IMR-90 (cell line): ENCODE measurements at regions of chr18 and their contacts with region 1.

Region 1: GRCh38 chr18:56702946-56703345 is 51.8 kb downstream of the WDR7 start:
- DNase-seq: peak; percentile 50
- ATAC-seq: peak; percentile 68
- H3K4me3 ChIP-seq: no peak overlapping the region
- H3K27ac ChIP-seq: no peak overlapping the region
- H3K4me1 ChIP-seq: no peaks in the 10 kb centered on the region
- H3K27me3 ChIP-seq: no peaks in the 10 kb centered on the region
- CTCF ChIP-seq: peak; percentile 59
- POLR2A ChIP-seq: no peak
- RAD21 ChIP-seq: peak; percentile 52

Region 2: GRCh38 chr18:56489893-56490292 is 213.1 kb before region 1 on chr18:
- CTCF ChIA-PET with region 1: no interaction called
- POLR2A ChIA-PET with region 1: no interaction called
- dilution Hi-C with region 1: no loop called
- in situ Hi-C with region 1: no loop called
- intact Hi-C with region 1: no loop called
- DNase-seq: no peak
- ATAC-seq: no peak
- H3K4me3 ChIP-seq: no peak overlapping the region
- H3K27ac ChIP-seq: no peak overlapping the region
- H3K4me1 ChIP-seq: no peaks in the 10 kb centered on the region
- H3K27me3 ChIP-seq: peaks cover 9% of the 10 kb centered on the region
- CTCF ChIP-seq: no peak
- POLR2A ChIP-seq: no peak
- RAD21 ChIP-seq: no peak

Region 3: DNA sequence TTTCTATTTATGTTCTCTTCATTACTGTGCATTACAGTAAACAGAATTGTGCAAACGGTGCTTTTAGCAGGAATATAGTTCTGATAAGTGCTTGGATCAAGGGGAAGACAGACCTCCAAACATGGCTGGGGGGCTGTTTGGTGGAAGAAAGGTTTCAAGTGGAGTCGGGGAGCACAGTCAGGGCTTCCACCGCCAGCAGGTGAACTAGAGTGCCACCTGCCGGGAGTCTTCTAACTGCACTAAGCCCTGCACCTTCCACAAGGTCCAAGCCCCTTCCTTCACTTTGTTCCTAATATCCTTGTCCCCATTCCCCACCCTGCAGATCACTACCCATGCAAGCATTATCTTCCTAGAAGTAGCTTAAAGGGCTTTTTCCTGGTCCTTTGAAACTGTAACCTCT is 743.4 kb after region 1 on chr18:
- CTCF ChIA-PET with region 1: no interaction called
- POLR2A ChIA-PET with region 1: no interaction called
- dilution Hi-C with region 1: no loop called
- in situ Hi-C with region 1: no loop called
- intact Hi-C with region 1: loop called (anchors 2 kb)
- DNase-seq: peak; percentile 4
- ATAC-seq: no peak
- H3K4me3 ChIP-seq: no peak overlapping the region
- H3K27ac ChIP-seq: no peak overlapping the region
- H3K4me1 ChIP-seq: no peaks in the 10 kb centered on the region
- H3K27me3 ChIP-seq: peaks cover 25% of the 10 kb centered on the region
- CTCF ChIP-seq: peak; percentile 39; the same call in 1 of the 2 replicates
- POLR2A ChIP-seq: no peak
- RAD21 ChIP-seq: peak; percentile 57